Colonic mucosa (tissue), 4 donors: ENCODE measurements at regions of chr2 and their contacts with region 1.

Region 1: DNA sequence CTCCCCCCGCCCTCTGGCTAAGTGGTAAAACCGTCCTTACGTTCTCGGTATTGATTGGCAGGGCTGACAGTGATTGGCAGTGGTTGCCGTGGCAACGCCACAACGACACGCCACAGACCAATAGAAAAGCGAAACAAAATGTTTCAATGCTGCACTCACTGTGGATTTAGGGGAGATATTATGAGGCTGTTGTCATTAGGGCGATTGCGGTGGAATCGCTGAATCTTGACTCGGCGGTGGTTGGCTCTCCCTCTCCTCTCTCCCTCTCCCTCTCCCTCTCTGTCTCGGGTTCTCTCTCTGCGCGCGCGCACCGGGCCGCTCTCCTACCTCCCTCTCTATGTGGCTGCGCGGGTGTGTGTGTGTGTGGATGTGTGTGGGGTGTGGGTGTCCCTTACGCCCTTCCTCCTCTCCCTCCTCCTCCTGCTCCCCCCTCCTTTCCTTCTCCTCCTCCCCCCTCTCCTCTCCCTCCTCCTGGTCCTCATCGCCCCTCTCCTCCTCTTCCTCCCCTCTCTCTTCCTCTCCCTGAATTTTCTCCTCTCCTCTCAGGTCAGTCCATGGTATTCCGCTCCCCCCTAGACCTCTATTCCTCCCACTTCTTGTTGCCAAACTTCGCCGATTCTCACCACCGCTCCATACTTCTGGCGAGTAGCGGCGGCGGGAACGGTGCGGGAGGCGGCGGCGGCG is at the start of gene SIX3:
- DNase-seq: no peak
- H3K4me3 ChIP-seq: peak within 1 kb of the TSS; percentile 19
- H3K27ac ChIP-seq: no peak within 1 kb of the TSS
- H3K4me1 ChIP-seq: peaks cover 4% of the 10 kb centered on the region
- H3K27me3 ChIP-seq: peaks cover 88% of the 10 kb centered on the region
- CTCF ChIP-seq: no peak
- total RNA-seq, gene SIX3: not detected

Region 2: GRCh38 chr2:44778671-44779476 is 162.8 kb before region 1 on chr2:
- intact Hi-C with region 1: no loop called
- DNase-seq: no peak
- H3K4me3 ChIP-seq: no peak overlapping the region
- H3K27ac ChIP-seq: no peak overlapping the region
- H3K4me1 ChIP-seq: no peaks in the 10 kb centered on the region
- H3K27me3 ChIP-seq: no peaks in the 10 kb centered on the region
- CTCF ChIP-seq: no peak

Region 3: GRCh38 chr2:44802777-44803424 is 138.8 kb before region 1 on chr2:
- intact Hi-C with region 1: loop called (anchors 10 kb)
- DNase-seq: no peak
- H3K4me3 ChIP-seq: no peak overlapping the region
- H3K27ac ChIP-seq: no peak overlapping the region
- H3K4me1 ChIP-seq: peaks cover 3% of the 10 kb centered on the region
- H3K27me3 ChIP-seq: peaks cover 66% of the 10 kb centered on the region
- CTCF ChIP-seq: no peak

Region 4: DNA sequence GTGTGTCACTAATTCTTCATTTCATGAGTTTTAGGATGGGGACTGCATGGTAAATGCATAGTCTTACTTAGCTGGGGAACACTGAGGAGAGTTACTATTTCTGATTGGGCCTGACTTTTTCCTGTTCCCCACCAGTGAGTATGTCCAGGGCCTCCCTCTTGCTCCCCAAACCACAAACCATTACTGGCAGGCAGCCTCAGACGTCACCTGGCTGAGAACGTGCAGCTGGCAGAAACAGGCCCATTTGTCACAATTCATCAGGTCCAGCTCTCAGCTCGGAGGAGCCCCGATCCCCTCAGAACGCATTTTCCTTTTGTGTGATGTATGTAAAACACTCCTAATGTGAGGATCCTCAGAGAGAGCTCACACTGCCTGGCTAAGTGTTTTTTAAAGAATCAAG is 71.9 kb before region 1 on chr2:
- intact Hi-C with region 1: no loop called
- DNase-seq: no peak
- H3K4me3 ChIP-seq: no peak overlapping the region
- H3K27ac ChIP-seq: no peak overlapping the region
- H3K4me1 ChIP-seq: no peaks in the 10 kb centered on the region
- H3K27me3 ChIP-seq: no peaks in the 10 kb centered on the region
- CTCF ChIP-seq: no peak

Region 5: GRCh38 chr2:44912660-44913059 is 29.0 kb before region 1 on chr2:
- intact Hi-C with region 1: no loop called
- DNase-seq: no peak
- H3K4me3 ChIP-seq: no peak overlapping the region
- H3K27ac ChIP-seq: no peak overlapping the region
- H3K4me1 ChIP-seq: no peaks in the 10 kb centered on the region
- H3K27me3 ChIP-seq: no peaks in the 10 kb centered on the region
- CTCF ChIP-seq: no peak

Region 6: DNA sequence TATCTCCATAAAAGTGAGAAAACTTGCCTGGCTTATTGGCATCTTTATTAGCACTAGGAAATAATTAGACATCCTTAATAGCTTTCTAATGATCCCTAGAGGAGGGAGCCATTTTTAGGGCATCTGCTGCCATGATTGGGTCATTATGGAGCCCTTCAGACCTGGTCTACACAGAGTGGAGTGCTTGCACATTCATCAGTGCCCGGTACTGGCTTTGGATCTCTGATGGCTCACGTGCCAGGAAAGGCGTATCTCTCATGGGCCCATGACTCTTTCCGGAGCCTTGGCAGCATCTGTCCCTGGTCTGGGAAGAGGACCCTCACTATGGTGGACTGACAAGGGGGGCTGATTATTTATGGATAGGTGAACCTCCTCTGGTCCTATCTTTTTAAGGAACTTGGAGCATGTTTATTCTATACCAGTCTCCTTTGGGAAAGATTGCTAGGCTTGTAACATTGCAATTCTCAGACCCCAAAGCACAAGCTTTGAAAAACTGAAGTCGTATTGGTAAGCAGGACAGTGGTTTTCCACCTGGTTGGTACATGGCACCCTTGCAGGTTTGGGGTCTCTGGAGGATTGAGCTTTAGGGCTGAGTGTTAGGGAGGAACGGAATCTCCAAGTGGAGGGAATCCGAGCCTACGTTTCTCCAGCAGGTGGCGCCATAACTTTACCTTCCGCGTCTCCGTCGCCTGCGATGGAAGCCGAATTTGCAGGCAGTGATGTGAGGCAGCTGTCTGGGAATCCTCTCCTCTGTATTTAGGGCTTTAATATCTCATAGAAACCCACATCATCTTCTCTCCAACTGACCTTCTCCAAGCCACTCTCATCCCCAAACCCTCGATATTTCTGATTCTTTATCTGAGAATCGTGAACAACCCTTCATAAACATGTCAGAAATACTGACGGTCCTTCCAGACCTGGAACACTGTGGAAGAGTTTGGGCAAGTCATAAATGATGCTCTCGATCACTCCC is 39.7 kb after region 1 on chr2:
- intact Hi-C with region 1: no loop called
- DNase-seq: peak; percentile 73
- H3K4me3 ChIP-seq: no peak overlapping the region
- H3K27ac ChIP-seq: no peak overlapping the region
- H3K4me1 ChIP-seq: no peaks in the 10 kb centered on the region
- H3K27me3 ChIP-seq: no peaks in the 10 kb centered on the region
- CTCF ChIP-seq: peak; percentile 82